Naive thymus-derived CD8-positive, alpha-beta T cell (primary cell): ENCODE measurements at regions of chr14 and their contacts with region 1.

Region 1: GRCh38 chr14:21014761-21015190 is 10.1 kb downstream of the NDRG2 start:
- DNase-seq: peak; percentile 66 to 88 (median 78)
- ATAC-seq: peak; percentile 83 to 95
- H3K4me3 Mint-ChIP-seq: no peak overlapping the region
- H3K27ac Mint-ChIP-seq: no peak overlapping the region
- H3K4me1 Mint-ChIP-seq: peaks cover 0 to 2% (median under 1%) of the 10 kb centered on the region in 4 donors
- H3K27me3 Mint-ChIP-seq: peaks cover 11 to 29% (median 15%) of the 10 kb centered on the region in 5 donors

Region 2: DNA sequence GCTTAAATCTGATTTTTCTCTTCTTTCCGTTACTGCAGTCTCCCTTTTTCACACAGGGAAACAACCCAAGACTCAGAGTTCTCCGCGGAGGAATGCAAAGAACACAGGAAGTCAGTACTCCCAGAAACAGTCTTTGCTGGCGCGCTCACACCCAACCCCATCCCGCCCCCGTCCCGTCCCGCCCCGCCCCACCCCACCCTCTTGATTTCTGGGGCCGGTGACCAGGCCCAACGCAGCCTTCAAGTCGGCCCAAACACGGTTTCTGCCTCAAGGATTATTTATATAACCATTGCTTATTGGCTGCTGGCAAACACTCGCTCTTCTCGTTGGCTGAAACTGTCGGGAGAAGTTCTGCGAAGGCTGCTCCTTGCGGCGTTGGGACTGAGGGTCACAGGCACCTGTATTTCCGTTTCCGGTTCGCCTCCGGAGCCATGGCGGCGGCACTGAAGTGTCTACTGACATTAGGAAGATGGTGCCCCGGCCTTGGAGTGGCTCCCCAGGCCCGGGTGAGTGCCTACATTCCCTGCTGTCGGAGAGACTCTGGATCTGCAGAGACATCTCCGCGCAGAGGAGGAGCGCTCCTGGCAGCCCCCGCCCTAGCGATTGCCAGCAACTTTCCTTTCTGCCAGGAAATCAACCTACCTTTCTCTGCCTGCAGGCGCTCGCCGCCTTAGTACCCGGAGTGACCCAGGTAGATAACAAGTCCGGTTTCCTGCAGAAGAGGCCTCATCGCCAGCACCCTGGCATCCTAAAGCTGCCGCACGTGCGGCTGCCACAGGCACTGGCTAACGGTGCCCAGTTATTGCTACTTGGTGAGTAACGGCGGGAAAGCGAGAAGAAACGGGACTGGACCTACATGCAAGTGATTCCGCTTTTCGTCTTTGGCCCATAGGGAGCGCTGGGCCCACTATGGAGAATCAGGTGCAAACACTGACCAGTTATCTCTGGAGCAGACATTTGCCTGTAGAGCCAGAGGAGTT is 24.9 kb before region 1 on chr14 and contains the start of gene METTL17:
- POLR2A ChIA-PET with region 1: no interaction called
- DNase-seq: peak; percentile 66 to 91 (median 81)
- ATAC-seq: peak; percentile 94
- H3K4me3 Mint-ChIP-seq: peak within 1 kb of the TSS; percentile 89 to 99 (median 95)
- H3K27ac Mint-ChIP-seq: peak within 1 kb of the TSS; percentile 92 to 98 (median 94)
- H3K4me1 Mint-ChIP-seq: peaks cover 13 to 42% (median 29%) of the 10 kb centered on the region in 4 donors
- H3K27me3 Mint-ChIP-seq: no peaks in the 10 kb centered on the region
- polyA plus RNA-seq, gene METTL17: 29.8 to 50.8 (median 38.2) TPM

Region 3: DNA sequence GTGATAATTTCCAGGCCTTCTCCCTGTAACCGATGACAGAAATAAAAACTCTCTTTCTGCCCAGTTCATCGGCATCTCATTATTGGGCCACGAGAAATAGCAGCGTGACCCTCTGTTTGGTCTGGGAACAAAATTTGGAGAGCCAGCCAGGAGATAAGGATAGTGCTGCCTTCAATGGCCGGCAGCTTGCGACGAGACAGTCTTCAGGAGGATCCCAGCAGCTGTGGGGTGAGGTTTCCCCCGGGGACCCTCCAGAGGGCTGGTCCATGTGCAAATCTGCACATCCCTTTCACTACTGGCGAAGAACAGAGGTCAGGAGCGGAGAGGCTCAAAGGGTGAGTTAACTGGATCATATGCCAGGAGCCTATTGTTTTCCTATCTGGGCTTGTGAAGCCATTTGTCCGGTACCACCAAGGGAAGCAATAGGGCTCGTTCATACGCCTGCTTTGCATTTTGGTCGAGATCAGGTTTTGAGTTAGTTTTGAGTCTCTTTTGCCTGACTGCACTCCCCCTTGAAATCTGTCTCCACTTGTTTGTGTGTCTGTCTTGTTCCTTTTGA is 10.9 kb before region 1 on chr14:
- POLR2A ChIA-PET with region 1: no interaction called
- DNase-seq: no peak
- ATAC-seq: no peak
- H3K4me3 Mint-ChIP-seq: no peak overlapping the region
- H3K27ac Mint-ChIP-seq: no peak overlapping the region
- H3K4me1 Mint-ChIP-seq: peaks cover 0 to under 1% (median 0%) of the 10 kb centered on the region in 4 donors
- H3K27me3 Mint-ChIP-seq: no peaks in the 10 kb centered on the region

Region 4: DNA sequence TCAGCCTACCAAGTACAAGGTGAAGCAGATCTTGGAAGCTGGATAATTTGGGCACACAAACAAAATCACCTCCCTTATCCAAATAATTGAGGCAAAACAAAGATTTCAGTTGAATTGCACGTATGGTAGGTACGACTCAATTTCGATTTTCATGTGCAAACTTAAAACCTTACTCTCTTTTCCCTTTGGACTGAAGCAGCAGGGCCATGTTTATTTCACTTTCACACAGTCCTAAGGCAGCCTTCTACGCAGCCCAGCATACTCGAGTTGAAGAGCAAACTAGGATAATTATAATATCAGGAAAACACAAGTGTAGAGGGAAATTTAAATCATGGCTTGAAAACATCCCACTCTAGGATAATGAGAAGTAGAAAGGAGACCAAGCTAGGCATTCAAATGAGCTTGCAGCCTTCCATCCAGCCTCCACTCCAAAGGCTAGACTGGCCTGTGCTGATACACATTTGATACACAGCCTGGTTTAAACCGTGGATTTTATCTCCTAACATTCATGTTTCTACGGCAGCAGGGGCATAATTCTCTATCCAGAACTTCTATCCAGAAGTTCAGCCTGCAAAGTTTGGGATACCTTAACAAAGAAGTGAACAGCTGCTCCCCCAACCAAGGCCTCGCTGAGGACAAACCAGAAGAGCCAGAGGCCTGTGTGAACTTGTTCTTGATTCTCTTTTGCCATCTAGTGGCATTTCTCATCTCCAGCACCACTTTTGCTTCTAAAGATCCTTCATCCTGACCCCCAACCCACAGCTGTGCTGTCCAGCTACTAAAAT is 25.0 kb after region 1 on chr14:
- POLR2A ChIA-PET with region 1: interaction called, 14 read pairs
- DNase-seq: peak in 7 of 10 donors; percentile 8 to 65 (median 37)
- ATAC-seq: peak; percentile 85 to 91
- H3K4me3 Mint-ChIP-seq: no peak overlapping the region
- H3K27ac Mint-ChIP-seq: no peak overlapping the region
- H3K4me1 Mint-ChIP-seq: peaks cover 6 to 8% (median 7%) of the 10 kb centered on the region in 4 donors
- H3K27me3 Mint-ChIP-seq: peaks cover 6 to 19% (median 12%) of the 10 kb centered on the region in 5 donors

Region 5: DNA sequence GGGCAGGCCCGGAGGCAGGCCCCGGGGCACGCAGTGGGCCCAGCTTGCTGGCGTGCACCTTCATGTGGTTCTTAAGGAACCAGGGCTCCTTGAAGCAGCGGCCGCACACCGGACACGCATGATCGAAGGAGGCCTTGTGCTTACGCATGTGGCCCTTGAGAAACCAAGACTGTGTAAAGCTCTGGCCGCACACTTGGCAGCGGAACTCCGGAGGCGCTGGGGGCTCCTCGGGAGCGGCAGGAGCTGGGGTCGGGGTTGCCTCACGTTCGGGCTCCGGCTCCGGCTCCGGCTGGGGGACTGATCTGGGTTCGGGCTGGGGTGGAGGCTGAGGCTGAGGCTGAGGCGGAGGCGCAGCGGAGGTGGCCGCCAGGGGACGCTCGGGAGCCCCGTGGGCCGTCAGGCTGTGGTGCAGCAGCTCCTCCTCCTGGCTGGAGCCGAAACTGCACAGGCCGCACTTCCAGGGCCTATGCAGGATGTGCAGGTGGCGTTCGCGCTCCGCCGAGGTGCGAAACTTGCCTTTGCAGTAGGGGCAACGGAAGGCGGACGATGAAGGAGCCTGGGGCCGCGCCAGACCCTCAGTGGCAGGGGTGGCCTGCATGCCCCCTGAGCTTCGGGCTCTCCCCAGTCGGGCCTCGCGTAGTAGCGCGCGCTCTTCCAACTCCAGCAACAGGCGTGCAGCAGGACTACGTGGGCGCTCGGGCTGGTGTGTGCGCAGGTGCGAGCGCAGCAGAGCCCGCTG is 77.7 kb after region 1 on chr14:
- POLR2A ChIA-PET with region 1: interaction called, 15 read pairs
- DNase-seq: peak; percentile 81 to 96 (median 92)
- ATAC-seq: peak; percentile 61 to 69
- H3K4me3 Mint-ChIP-seq: peak overlapping the region in 1 of 10 donors; percentile 14
- H3K27ac Mint-ChIP-seq: peak overlapping the region in 9 of 10 donors; percentile 25 to 92 (median 89)
- H3K4me1 Mint-ChIP-seq: peaks cover 25 to 40% (median 28%) of the 10 kb centered on the region in 4 donors
- H3K27me3 Mint-ChIP-seq: peaks cover 0 to 2% (median 0%) of the 10 kb centered on the region in 5 donors